Esophagus muscularis mucosa (tissue), 4 donors: ENCODE measurements at regions of chr9 and their contacts with region 1.

Region 1: DNA sequence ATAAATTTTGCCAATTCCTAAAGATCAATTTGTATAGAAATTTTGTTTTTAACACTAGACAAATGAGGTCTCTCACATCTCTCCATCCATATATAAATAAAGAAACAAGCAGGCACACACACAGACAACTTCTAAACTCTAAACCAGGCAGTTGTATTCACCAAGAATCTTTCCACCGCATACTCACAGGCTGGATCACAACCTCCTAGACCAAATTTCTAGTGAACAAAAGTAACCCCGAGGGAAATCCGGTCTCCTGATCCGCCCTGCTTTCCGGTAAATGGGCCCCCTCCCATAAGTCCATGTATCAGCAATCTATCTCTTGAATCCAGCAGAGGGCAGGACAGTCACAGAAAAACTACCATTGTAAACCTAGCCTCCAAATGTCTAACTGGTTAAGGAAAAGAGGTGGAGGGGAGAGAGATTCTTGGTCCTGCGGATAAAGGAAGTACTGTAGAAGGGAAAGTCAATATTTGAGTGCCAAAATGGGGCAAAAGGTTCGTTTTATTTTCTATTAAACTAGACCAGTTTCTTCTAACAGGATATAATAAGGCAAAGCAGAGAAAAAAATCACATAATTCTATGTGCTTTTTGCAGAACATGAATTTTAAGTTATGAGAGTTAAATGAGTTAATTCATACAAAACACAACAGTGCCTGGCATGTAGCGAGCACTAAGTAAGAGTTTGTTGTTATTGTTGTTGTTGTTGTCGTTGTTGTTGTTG is 4.8 kb upstream of the SMU1 start:
- DNase-seq: no peak
- H3K4me3 ChIP-seq: peak overlapping the region in 1 of 4 donors; percentile 23
- H3K27ac ChIP-seq: peak overlapping the region; percentile 0 to 49 (median 14)
- H3K4me1 ChIP-seq: peaks cover 0 to 16% (median 9%) of the 10 kb centered on the region in 4 donors
- H3K27me3 ChIP-seq: no peaks in the 10 kb centered on the region
- CTCF ChIP-seq: peak; percentile 71 to 90 (median 72)
- EP300 ChIP-seq: no peak
- POLR2A ChIP-seq: no peak

Region 2: DNA sequence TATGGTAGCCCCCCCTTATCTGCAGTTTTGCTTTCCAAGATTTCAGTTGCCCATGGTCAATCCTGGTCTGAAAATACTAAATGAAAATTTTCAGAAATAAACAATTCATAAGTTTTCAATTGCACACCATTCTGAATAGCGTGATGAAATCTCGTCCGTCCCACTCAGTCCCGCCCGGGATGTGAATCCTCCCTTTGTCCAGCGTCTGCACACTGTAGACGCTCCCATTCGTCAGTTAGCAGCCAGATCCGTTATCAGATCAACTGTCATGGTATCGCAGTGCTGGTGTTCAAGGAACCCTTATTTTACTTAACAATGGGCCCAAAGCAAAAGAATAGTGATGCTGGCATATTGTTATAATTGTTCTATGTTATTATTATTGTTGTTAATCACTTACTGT is 199.3 kb before region 1 on chr9:
- intact Hi-C with region 1: no loop called
- DNase-seq: no peak
- H3K4me3 ChIP-seq: no peak overlapping the region
- H3K27ac ChIP-seq: no peak overlapping the region
- H3K4me1 ChIP-seq: peaks cover 0 to 11% (median 3%) of the 10 kb centered on the region in 4 donors
- H3K27me3 ChIP-seq: no peaks in the 10 kb centered on the region
- CTCF ChIP-seq: no peak
- EP300 ChIP-seq: no peak
- POLR2A ChIP-seq: no peak

Region 3: GRCh38 chr9:33170464-33171415 is 89.5 kb after region 1 on chr9:
- intact Hi-C with region 1: loop called (anchors 2 kb)
- DNase-seq: no peak
- H3K4me3 ChIP-seq: no peak overlapping the region
- H3K27ac ChIP-seq: peak overlapping the region in 1 of 4 donors; percentile 26
- H3K4me1 ChIP-seq: peaks cover 10 to 26% (median 21%) of the 10 kb centered on the region in 4 donors
- H3K27me3 ChIP-seq: no peaks in the 10 kb centered on the region
- CTCF ChIP-seq: peak; percentile 46 to 56 (median 48)
- EP300 ChIP-seq: no peak
- POLR2A ChIP-seq: no peak